IMR-90 (cell line): ENCODE measurements at regions of chr18 and their contacts with region 1.

Region 1: DNA sequence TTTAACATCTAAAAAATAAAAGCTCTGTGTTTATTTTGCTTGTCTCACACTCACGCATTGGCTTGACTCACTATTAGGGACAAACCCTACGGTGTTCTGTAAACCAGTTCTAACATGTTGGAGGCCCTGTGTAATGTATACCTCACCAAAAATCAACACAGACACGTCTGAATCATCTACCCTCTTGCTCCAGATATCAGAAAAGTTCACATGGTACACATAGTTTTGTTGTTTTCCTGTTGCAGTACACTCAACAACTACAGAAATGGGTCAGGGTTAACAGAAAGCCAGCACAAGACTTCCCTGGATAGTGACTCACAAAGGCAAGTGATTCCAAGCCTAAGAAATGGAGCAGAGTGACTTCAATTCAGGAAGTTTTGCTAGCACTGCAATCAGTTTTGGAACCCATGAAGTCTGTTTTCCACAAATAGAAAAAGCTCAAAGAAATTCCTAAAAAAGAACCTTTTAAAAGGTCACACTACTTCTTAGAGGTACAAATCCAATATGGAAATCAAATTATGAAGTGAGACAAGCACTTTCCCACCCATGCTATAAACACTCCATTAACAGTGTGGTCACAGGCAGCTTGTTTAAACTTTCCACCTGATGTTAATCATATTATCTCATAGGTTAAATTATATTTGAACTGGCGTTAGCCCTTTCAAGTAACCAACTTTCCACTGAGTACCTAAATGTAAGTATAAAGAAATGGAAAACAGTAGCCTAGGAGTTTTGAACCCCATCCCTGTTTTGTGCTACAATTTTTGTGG is 87.4 kb downstream of the GAREM1 start:
- DNase-seq: peak; percentile 98
- ATAC-seq: peak; percentile 90
- H3K4me3 ChIP-seq: no peak overlapping the region
- H3K27ac ChIP-seq: no peak overlapping the region
- H3K4me1 ChIP-seq: peaks cover 8% of the 10 kb centered on the region; the same call in 1 of the 2 replicates
- H3K27me3 ChIP-seq: no peaks in the 10 kb centered on the region
- CTCF ChIP-seq: no peak
- POLR2A ChIP-seq: no peak
- RAD21 ChIP-seq: no peak

Region 2: GRCh38 chr18:32092422-32093101 is 290.7 kb before region 1 on chr18:
- CTCF ChIA-PET with region 1: no interaction called
- POLR2A ChIA-PET with region 1: no interaction called
- dilution Hi-C with region 1: no loop called
- in situ Hi-C with region 1: no loop called
- intact Hi-C with region 1: loop called (anchors 10 kb)
- DNase-seq: peak; percentile 94
- ATAC-seq: peak; percentile 97
- H3K4me3 ChIP-seq: peak overlapping the region; percentile 100
- H3K27ac ChIP-seq: peak overlapping the region; percentile 92
- H3K4me1 ChIP-seq: no peaks in the 10 kb centered on the region
- H3K27me3 ChIP-seq: no peaks in the 10 kb centered on the region
- CTCF ChIP-seq: no peak
- POLR2A ChIP-seq: peak; percentile 63; the same call in 1 of the 2 replicates
- RAD21 ChIP-seq: no peak

Region 3: GRCh38 chr18:32213693-32214092 is 169.5 kb before region 1 on chr18:
- CTCF ChIA-PET with region 1: no interaction called
- POLR2A ChIA-PET with region 1: no interaction called
- dilution Hi-C with region 1: no loop called
- in situ Hi-C with region 1: no loop called
- intact Hi-C with region 1: no loop called
- DNase-seq: no peak
- ATAC-seq: no peak
- H3K4me3 ChIP-seq: no peak overlapping the region
- H3K27ac ChIP-seq: no peak overlapping the region
- H3K4me1 ChIP-seq: no peaks in the 10 kb centered on the region
- H3K27me3 ChIP-seq: no peaks in the 10 kb centered on the region
- CTCF ChIP-seq: no peak
- POLR2A ChIP-seq: no peak
- RAD21 ChIP-seq: no peak

Region 4: DNA sequence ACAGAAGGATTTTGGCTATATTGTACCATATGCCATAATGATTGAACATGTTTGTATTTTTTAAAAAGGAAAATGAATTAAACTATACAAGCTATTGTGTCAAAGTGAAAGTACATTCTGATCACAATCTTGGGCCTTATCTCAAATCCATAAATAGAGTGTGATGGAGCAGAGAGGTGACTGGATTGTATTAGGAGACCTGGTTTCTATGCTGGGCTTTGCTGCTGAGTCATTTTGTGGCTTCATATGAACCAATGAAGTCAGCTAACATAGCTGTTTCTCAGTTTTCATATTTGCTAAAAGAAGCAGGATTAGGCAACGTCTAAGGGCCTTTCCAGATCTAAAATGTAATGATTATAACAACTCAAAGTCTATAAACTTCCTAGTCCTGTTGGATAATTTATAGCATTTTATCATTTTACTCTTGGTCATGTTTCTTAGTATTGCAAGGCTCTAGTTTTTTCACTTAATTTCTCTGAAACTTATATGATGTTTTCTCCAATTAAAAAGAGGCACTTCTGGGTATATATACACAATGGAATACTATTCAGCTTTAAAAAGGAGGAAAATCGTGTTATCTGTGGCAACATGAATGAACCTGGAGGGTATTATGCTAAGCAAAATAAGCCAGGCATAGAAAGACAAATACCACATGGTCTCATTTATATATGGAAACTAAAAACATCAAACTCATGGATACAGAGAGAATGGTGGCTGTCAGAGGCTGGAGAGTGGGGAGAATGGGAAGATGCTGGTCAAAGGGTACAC is 81.1 kb before region 1 on chr18:
- CTCF ChIA-PET with region 1: no interaction called
- POLR2A ChIA-PET with region 1: no interaction called
- dilution Hi-C with region 1: no loop called
- in situ Hi-C with region 1: no loop called
- intact Hi-C with region 1: loop called (anchors 5 kb)
- DNase-seq: peak; percentile 94
- ATAC-seq: peak; percentile 88
- H3K4me3 ChIP-seq: no peak overlapping the region
- H3K27ac ChIP-seq: peak overlapping the region; percentile 48; the same call in 1 of the 2 replicates
- H3K4me1 ChIP-seq: peaks cover 8% of the 10 kb centered on the region
- H3K27me3 ChIP-seq: no peaks in the 10 kb centered on the region
- CTCF ChIP-seq: no peak
- POLR2A ChIP-seq: no peak
- RAD21 ChIP-seq: no peak

Region 5: DNA sequence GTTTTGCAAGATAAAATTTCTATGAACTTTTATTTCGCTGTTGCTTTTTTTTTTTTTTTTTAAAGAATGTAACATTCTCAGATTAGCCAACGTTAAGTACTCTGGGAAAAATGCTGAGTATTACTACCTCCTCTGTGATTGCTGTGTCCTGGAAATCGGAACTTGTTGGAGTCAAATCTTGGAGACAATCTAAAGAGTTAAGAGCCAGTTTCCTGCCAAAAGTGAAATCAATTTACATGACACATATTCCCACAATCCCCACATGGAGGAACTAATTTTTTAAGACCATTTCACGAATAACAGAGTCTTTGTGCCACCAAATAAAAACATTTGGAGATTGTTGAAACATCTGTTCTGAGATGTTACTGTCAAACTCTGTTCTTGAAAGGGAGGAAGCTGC is 65.6 kb before region 1 on chr18:
- CTCF ChIA-PET with region 1: no interaction called
- POLR2A ChIA-PET with region 1: no interaction called
- dilution Hi-C with region 1: no loop called
- in situ Hi-C with region 1: no loop called
- intact Hi-C with region 1: loop called (anchors 5 kb)
- DNase-seq: peak; percentile 57
- ATAC-seq: peak; percentile 33
- H3K4me3 ChIP-seq: no peak overlapping the region
- H3K27ac ChIP-seq: no peak overlapping the region
- H3K4me1 ChIP-seq: peaks cover 6% of the 10 kb centered on the region
- H3K27me3 ChIP-seq: no peaks in the 10 kb centered on the region
- CTCF ChIP-seq: no peak
- POLR2A ChIP-seq: no peak
- RAD21 ChIP-seq: no peak

Region 6: DNA sequence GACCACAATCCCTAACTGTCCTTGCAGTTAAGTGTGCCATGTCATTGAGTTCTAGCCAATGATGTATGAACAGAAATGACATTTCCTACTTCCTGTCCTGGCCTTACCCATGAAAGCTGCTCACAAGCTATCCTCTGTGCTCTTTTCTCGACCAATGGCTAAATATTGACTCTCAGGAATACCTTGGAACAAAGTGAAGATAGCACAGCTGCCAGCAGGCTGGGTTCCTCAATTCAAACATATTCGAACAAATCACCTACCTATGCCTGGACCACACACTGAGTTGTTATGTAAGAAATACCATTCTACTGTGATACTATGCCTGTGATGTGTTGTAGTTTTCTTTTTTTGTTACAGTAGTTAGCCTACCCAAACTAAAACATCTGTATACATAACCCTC is 22.4 kb after region 1 on chr18:
- CTCF ChIA-PET with region 1: no interaction called
- POLR2A ChIA-PET with region 1: no interaction called
- dilution Hi-C with region 1: no loop called
- in situ Hi-C with region 1: no loop called
- intact Hi-C with region 1: no loop called
- DNase-seq: no peak
- ATAC-seq: no peak
- H3K4me3 ChIP-seq: no peak overlapping the region
- H3K27ac ChIP-seq: no peak overlapping the region
- H3K4me1 ChIP-seq: no peaks in the 10 kb centered on the region
- H3K27me3 ChIP-seq: no peaks in the 10 kb centered on the region
- CTCF ChIP-seq: no peak
- POLR2A ChIP-seq: no peak
- RAD21 ChIP-seq: no peak

Region 7: GRCh38 chr18:32446780-32447179 is 63.5 kb after region 1 on chr18:
- CTCF ChIA-PET with region 1: no interaction called
- POLR2A ChIA-PET with region 1: no interaction called
- dilution Hi-C with region 1: no loop called
- in situ Hi-C with region 1: no loop called
- intact Hi-C with region 1: loop called (anchors 5 kb)
- DNase-seq: no peak
- ATAC-seq: no peak
- H3K4me3 ChIP-seq: no peak overlapping the region
- H3K27ac ChIP-seq: no peak overlapping the region
- H3K4me1 ChIP-seq: no peaks in the 10 kb centered on the region
- H3K27me3 ChIP-seq: no peaks in the 10 kb centered on the region; the same call in 1 of the 2 replicates
- CTCF ChIP-seq: no peak
- POLR2A ChIP-seq: no peak
- RAD21 ChIP-seq: no peak

Region 8: DNA sequence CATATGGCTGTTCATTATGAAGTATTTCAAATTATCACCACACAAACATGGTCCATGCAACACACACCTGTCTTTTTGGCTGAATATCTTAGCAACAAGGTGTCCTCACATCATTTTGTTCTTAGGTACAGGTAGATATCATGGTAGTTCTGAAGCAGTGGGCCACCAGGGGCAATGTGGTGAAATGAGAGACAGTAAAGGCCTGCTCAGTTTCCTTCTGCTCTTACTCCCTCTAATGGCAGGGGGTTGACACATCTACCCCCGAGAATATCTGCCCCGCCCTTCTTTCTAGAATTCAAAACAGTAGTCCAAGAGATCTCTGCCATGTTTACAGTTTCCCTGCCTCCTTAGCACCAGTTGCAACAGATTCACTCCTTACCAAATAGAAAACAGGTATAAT is 536.6 kb after region 1 on chr18:
- CTCF ChIA-PET with region 1: no interaction called
- POLR2A ChIA-PET with region 1: no interaction called
- dilution Hi-C with region 1: no loop called
- in situ Hi-C with region 1: no loop called
- intact Hi-C with region 1: no loop called
- DNase-seq: no peak
- ATAC-seq: no peak
- H3K4me3 ChIP-seq: no peak overlapping the region
- H3K27ac ChIP-seq: no peak overlapping the region
- H3K4me1 ChIP-seq: peaks cover 1% of the 10 kb centered on the region; the same call in 1 of the 2 replicates
- H3K27me3 ChIP-seq: no peaks in the 10 kb centered on the region
- CTCF ChIP-seq: peak; percentile 15; the same call in 1 of the 2 replicates
- POLR2A ChIP-seq: no peak
- RAD21 ChIP-seq: no peak